Mammary epithelial cell (primary cell): ENCODE measurements at regions of chr12 and their contacts with region 1.

Region 1: DNA sequence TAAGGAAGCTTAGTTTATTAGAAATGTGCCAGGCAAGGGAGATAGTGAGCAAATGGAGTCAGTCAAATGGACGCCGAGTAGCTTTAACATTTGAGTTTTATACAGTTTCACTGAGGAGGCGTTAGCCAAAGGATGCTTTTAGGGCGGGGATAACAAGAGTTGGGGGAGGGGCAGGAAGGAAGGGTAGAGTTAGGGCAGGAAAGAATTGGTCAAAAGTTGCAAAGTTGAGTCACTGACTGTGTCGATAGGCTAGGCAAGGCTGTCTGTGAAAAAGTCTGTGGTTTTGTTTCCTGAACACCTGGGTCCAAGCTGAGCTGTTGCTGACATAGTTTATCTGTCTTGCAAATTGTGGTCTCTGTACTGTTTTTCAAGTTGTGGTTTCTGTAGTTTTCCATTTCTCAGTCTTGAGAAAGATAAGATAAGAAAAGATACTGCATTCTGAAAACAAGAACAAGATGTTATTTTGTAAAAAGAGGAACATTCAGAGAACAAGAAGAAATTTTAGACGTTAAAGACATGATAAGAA is 62.6 kb upstream of the RESF1 start:
- DNase-seq: peak; percentile 49
- H3K4me3 ChIP-seq: no peak overlapping the region
- H3K27ac ChIP-seq: no peak overlapping the region
- H3K4me1 ChIP-seq: no peaks in the 10 kb centered on the region
- H3K27me3 ChIP-seq: no peaks in the 10 kb centered on the region
- CTCF ChIP-seq: no peak

Region 2: GRCh38 chr12:31785318-31785717 is 111.3 kb before region 1 on chr12:
- CTCF ChIA-PET with region 1: no interaction called
- dilution Hi-C with region 1: loop called (anchors 5 kb)
- in situ Hi-C with region 1: no loop called
- intact Hi-C with region 1: no loop called
- DNase-seq: no peak
- H3K4me3 ChIP-seq: no peak overlapping the region
- H3K27ac ChIP-seq: no peak overlapping the region
- H3K4me1 ChIP-seq: no peaks in the 10 kb centered on the region
- H3K27me3 ChIP-seq: no peaks in the 10 kb centered on the region
- CTCF ChIP-seq: no peak

Region 3: GRCh38 chr12:31797230-31797872 is 99.2 kb before region 1 on chr12:
- CTCF ChIA-PET with region 1: no interaction called
- dilution Hi-C with region 1: no loop called
- in situ Hi-C with region 1: no loop called
- intact Hi-C with region 1: no loop called
- DNase-seq: no peak
- H3K4me3 ChIP-seq: no peak overlapping the region
- H3K27ac ChIP-seq: no peak overlapping the region
- H3K4me1 ChIP-seq: no peaks in the 10 kb centered on the region
- H3K27me3 ChIP-seq: no peaks in the 10 kb centered on the region
- CTCF ChIP-seq: no peak

Region 4: GRCh38 chr12:31951008-31951407 is 54.4 kb after region 1 on chr12:
- CTCF ChIA-PET with region 1: no interaction called
- dilution Hi-C with region 1: loop called (anchors 5 kb)
- in situ Hi-C with region 1: no loop called
- intact Hi-C with region 1: no loop called
- DNase-seq: no peak
- H3K4me3 ChIP-seq: no peak overlapping the region
- H3K27ac ChIP-seq: no peak overlapping the region
- H3K4me1 ChIP-seq: no peaks in the 10 kb centered on the region
- H3K27me3 ChIP-seq: no peaks in the 10 kb centered on the region
- CTCF ChIP-seq: no peak

Region 5: DNA sequence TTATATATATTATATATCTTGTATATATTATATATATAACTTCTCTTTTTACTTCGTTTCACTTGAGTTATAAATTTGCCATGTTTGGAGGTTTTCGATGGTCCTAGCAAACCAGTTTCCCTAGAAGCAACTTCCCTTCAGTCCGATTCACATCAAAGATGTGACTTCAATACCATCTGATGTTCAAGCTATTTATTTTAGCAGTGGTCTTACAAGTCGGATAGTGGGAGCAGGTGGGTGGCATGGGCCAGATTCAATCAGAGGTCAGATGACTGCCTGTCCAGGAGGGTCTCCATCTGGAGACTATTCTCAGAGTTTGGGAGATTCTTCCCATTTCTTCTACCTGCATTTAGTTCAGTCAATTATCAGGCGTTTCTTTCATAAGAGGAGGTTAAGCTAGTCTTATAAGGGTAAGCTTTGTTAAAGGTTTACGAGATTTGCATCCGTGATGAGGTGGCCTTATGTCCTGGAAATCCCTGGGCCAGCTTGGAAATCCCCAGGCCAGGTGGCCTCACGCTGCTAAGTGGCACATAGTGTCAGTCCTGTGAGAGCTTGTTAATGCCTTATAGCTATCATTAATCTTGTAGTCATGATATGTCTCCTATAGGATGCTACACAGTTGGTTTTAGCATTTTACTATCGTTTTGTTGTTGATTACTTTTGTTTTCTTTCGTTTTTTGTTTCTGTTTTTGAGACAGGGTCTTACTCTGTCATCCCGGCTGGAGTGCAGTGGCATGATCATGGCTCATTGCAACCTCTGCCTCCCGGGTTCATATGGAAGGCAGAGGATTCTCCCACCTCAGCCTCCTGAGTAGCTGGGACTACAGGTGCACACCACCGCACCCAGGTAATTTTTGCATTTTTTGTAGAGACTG is 355.9 kb after region 1 on chr12:
- CTCF ChIA-PET with region 1: no interaction called
- dilution Hi-C with region 1: loop called (anchors 5 kb)
- in situ Hi-C with region 1: no loop called
- intact Hi-C with region 1: no loop called
- DNase-seq: no peak
- H3K4me3 ChIP-seq: no peak overlapping the region
- H3K27ac ChIP-seq: no peak overlapping the region
- H3K4me1 ChIP-seq: peaks cover 24% of the 10 kb centered on the region
- H3K27me3 ChIP-seq: no peaks in the 10 kb centered on the region
- CTCF ChIP-seq: no peak